A673 (cell line): ENCODE measurements at regions of chr9 and their contacts with region 1.

Region 1: GRCh38 chr9:125066839-125067619 is 76.3 kb downstream of the SCAI start:
- DNase-seq: peak; percentile 6
- H3K4me3 ChIP-seq: no peak overlapping the region
- H3K27ac ChIP-seq: no peak overlapping the region
- H3K4me1 ChIP-seq: peaks cover 2% of the 10 kb centered on the region
- H3K27me3 ChIP-seq: no peaks in the 10 kb centered on the region
- CTCF ChIP-seq: no peak

Region 2: GRCh38 chr9:125131778-125132177 is 64.7 kb after region 1 on chr9:
- CTCF ChIA-PET with region 1: no interaction called
- POLR2A ChIA-PET with region 1: interaction called, 15 read pairs
- intact Hi-C with region 1: no loop called
- DNase-seq: no peak
- H3K4me3 ChIP-seq: no peak overlapping the region
- H3K27ac ChIP-seq: no peak overlapping the region
- H3K4me1 ChIP-seq: no peaks in the 10 kb centered on the region
- H3K27me3 ChIP-seq: no peaks in the 10 kb centered on the region
- CTCF ChIP-seq: no peak